ENCODE measurements at regions of chr1 and their contacts with region 1.

Region 1: DNA sequence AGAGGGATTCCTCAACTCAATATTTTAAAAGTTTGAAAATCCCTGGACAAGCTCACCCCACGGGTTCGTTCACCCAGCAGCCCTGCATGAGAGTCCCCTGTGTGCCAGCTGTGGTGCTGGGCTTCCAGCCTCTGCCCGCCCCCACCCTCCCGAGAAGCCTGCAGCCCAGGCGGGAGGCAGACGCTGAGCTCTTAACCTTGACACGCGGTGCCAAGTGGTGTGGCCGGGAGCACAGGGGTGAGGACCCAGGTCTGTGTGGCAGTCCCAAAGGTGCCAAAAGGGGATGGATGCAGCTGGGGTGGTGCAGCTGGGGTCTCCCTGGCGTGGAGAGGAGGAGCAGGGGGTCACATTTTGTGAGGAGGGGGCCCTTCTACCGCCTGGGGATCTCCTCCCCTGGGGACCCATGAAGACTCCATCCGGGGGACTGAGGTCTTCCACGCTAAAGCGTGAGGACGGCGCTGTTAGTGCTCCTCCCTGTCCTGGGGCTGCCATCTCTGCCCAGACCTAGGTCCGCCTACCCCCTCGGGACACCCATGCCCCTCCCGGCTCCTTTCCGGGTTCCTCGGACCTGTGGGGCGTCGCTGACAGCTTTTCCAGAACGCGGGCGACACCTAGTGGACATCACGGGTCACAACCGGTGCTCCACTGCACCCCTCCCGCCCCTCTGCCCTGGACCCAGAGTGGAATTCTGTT is 12.9 kb downstream of the PLA2G2F start:
- DNase-seq: peak; percentile 82 to 90 (median 84)
- H3K4me3 ChIP-seq: peak overlapping the region in 1 of 4 donors; percentile 29
- H3K27ac ChIP-seq: peak overlapping the region in 1 of 5 donors; percentile 76
- H3K4me1 ChIP-seq: peaks cover 5 to 13% of the 10 kb centered on the region in 2 donors
- H3K27me3 ChIP-seq: no peaks in the 10 kb centered on the region
- CTCF ChIP-seq: peak; percentile 87 to 97 (median 94)
- POLR2A ChIP-seq: no peak

Region 2: DNA sequence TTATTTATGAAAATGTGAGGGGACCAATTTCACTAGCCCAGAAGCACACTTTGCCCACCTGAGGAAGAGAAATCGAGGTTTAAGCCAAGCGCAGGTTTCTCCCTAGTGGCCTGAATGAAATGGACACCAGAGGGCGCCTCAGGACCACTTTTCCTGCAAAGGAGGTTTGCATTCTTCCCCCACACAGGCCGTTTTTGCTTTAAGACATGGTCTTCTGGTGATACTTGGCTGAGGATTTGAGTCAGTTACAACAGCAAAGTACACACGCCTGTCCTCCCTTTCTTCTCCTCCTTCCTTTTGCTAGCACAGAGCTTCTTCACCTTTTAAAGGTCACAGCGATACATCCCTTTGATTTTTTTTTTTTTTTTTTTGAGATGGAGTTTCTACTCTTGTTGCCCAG is 234.0 kb before region 1 on chr1:
- intact Hi-C with region 1: loop called (anchors 2 to 5 kb)
- DNase-seq: peak; percentile 75 to 93 (median 86)
- H3K4me3 ChIP-seq: no peak overlapping the region
- H3K27ac ChIP-seq: no peak overlapping the region
- H3K4me1 ChIP-seq: no peaks in the 10 kb centered on the region
- H3K27me3 ChIP-seq: no peaks in the 10 kb centered on the region
- CTCF ChIP-seq: peak; percentile 86 to 94 (median 88)
- POLR2A ChIP-seq: no peak

Region 3: DNA sequence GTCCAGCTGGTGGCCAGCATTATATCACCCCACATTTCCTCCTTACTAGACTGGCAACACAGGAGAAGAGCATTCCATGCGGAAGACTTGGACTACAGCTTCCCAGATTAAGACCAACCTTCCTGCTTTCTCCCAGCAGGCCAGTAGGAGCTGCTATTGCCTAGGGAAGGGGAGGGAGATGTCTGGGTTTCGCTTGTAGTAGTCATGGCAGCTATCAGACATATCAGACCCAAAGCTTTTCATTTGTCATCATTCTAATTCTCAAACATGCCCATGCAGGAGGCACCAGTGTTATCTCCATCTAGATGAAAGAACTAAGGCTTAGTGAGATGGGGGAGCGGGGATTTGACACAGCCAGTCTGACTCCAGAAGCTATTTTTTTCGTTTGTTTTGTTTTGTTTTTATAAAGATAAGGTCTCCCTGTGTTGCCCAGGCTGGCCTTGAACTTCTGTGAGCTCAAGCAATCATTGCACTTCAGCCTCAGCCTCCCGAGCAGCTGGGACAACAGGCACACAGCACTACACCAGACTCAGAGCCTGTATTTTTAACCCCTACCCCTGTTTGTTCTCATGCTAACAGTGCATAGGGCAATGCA is 177.1 kb before region 1 on chr1:
- intact Hi-C with region 1: loop called (anchors 5 to 10 kb)
- DNase-seq: peak; percentile 57 to 84 (median 74)
- H3K4me3 ChIP-seq: no peak overlapping the region
- H3K27ac ChIP-seq: no peak overlapping the region
- H3K4me1 ChIP-seq: peaks cover 6 to 10% of the 10 kb centered on the region in 2 donors
- H3K27me3 ChIP-seq: peaks cover 10% of the 10 kb centered on the region
- CTCF ChIP-seq: peak; percentile 68 to 98 (median 92)
- POLR2A ChIP-seq: no peak

Region 4: GRCh38 chr1:20100632-20101355 is 51.3 kb before region 1 on chr1:
- intact Hi-C with region 1: loop called in 1 of 2 experiments (anchors 5 kb)
- DNase-seq: peak; percentile 48 to 67 (median 61)
- H3K4me3 ChIP-seq: no peak overlapping the region
- H3K27ac ChIP-seq: no peak overlapping the region
- H3K4me1 ChIP-seq: no peaks in the 10 kb centered on the region
- H3K27me3 ChIP-seq: peaks cover 6% of the 10 kb centered on the region
- CTCF ChIP-seq: peak; percentile 76 to 91 (median 82)
- POLR2A ChIP-seq: no peak

Region 5: GRCh38 chr1:20507564-20508410 is 355.7 kb after region 1 on chr1 and contains the start of gene MUL1:
- intact Hi-C with region 1: no loop called
- DNase-seq: peak; percentile 93 to 98 (median 96)
- H3K4me3 ChIP-seq: peak within 1 kb of the TSS in 3 of 4 donors; percentile 71 to 91 (median 87)
- H3K27ac ChIP-seq: peak within 1 kb of the TSS; percentile 30 to 98 (median 72)
- H3K4me1 ChIP-seq: peaks cover 6 to 24% of the 10 kb centered on the region in 2 donors
- H3K27me3 ChIP-seq: no peaks in the 10 kb centered on the region
- CTCF ChIP-seq: no peak
- POLR2A ChIP-seq: peak; percentile 66 to 68
- total RNA-seq, gene MUL1: 23.8 to 48.0 (median 38.4) TPM

Measured in adrenal gland (tissue), 19 donors.